ENCODE measurements at regions of chr3 and their contacts with region 1.

Region 1: DNA sequence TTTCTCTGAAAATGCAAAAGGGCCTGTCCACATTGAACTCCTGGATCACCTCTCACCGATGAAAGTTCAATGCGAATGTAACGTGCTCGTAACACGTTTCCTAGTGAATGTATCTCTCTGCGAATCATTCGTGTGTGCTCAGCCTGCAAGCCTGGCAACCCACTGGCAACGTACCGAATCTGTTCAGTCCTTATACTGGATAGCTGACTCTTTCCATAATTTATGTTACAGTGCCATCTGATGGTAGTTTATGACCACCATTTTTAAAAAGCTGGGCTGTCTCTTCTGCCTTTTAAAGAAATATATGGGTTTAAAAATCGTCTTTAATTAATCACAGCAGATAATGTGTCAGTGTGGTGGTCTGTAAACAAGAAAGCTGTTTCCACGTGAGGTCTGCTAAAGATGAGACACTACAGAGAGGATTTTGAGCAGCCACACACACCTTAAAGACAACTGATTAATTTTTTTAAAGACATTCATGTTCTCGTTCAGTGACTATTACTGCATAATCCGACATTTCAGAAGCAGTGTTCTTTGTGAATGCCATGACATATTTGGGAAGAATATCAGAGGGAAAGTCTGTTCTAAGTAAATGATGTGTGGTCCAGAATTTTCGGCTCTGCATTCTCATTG is 69.4 kb upstream of the FOXP1 start:
- DNase-seq: peak; percentile 4
- ATAC-seq: peak; percentile 60; the same call in 1 of the 2 replicates
- H3K4me3 ChIP-seq: no peak overlapping the region
- H3K27ac ChIP-seq: no peak overlapping the region
- H3K4me1 ChIP-seq: peaks cover 0 to 2% of the 10 kb centered on the region in 2 experiments; a peak in 1 of 4 replicates
- H3K27me3 ChIP-seq: no peaks in the 10 kb centered on the region
- CTCF ChIP-seq: peak; percentile 25 to 60 (median 35); a peak in 4 of 6 replicates
- POLR2A ChIP-seq: no peak
- RAD21 ChIP-seq: peak; percentile 66

Region 2: DNA sequence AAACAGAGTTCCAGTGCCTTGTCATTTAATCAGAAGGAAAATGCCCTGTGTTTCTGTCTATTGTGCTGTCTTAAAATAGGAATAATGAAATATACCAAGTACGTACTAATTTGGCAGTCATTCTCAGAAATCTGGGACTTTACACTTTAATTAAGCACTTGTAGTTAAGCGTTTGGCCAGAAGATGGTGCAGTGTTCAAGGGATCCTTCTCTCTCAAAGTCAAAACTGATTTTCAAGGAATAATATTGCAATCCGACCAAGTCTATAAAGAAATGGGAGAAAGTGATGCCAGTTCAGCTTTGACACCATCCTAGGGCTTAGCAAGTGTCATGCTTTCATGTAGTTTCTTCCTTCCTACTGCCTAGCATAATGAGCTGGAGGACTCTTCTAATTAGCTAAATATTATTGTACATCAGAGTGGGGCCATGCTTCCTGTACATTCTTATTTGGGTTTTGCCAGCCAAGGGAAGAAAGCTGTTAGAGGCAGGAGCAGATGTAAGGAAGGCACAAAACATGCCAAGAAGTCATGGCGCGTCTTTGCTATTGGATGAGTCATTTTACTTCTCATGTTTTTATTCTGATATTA is 1588.6 kb before region 1 on chr3:
- CTCF ChIA-PET with region 1: no interaction called
- POLR2A ChIA-PET with region 1: no interaction called
- RAD21 ChIA-PET with region 1: no interaction called
- intact Hi-C with region 1: loop called (anchors 2 kb)
- DNase-seq: peak; percentile 4
- ATAC-seq: no peak
- H3K4me3 ChIP-seq: no peak overlapping the region
- H3K27ac ChIP-seq: no peak overlapping the region
- H3K4me1 ChIP-seq: no peaks in the 10 kb centered on the region
- H3K27me3 ChIP-seq: no peaks in the 10 kb centered on the region; the same call in 1 of the 2 replicates
- CTCF ChIP-seq: peak; percentile 11 to 64 (median 34); a peak in 4 of 6 replicates
- POLR2A ChIP-seq: no peak
- RAD21 ChIP-seq: peak; percentile 49; the same call in 1 of the 2 replicates

Region 3: GRCh38 chr3:70531063-70531657 is 1121.7 kb before region 1 on chr3:
- CTCF ChIA-PET with region 1: interaction called, 4 read pairs
- POLR2A ChIA-PET with region 1: no interaction called
- RAD21 ChIA-PET with region 1: no interaction called
- intact Hi-C with region 1: loop called (anchors 5 kb)
- DNase-seq: no peak
- ATAC-seq: no peak
- H3K4me3 ChIP-seq: no peak overlapping the region
- H3K27ac ChIP-seq: no peak overlapping the region
- H3K4me1 ChIP-seq: no peaks in the 10 kb centered on the region
- H3K27me3 ChIP-seq: no peaks in the 10 kb centered on the region; the same call in 1 of the 2 replicates
- CTCF ChIP-seq: peak; percentile 19 to 52 (median 28); a peak in 4 of 6 replicates
- POLR2A ChIP-seq: no peak
- RAD21 ChIP-seq: peak; percentile 46; the same call in 1 of the 2 replicates

Region 4: DNA sequence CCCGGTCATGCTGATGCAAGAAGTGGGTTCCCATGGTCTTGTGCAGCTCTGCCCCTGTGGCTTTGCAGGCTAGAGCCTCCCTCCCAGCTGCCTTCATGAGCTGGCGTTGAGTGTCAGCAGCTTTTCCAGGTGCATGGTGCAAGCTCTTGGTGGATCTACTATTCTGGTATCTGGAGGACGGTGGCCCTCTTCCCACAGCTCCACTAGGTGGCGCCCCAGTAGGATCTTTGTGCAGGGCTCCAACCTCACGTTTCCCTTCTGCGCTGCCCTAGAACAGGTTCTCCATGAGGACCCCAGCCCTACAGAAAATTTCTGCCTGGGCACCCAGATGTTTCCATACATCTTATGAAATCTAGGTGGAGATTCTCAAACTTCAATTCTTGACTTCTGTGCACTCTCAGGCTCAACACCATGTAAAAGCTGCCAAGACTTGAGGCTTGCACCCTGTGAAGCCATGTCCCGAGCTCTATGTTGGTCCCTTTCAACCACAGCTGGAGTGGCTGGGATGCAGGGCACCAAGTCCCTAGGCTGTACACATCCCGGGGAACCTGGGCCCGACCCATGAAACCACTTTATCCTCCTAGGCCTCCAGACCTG is 1102.1 kb before region 1 on chr3:
- CTCF ChIA-PET with region 1: interaction called, 9 read pairs
- POLR2A ChIA-PET with region 1: no interaction called
- RAD21 ChIA-PET with region 1: no interaction called
- intact Hi-C with region 1: loop called (anchors 5 kb)
- DNase-seq: no peak
- ATAC-seq: peak; percentile 79
- H3K4me3 ChIP-seq: no peak overlapping the region
- H3K27ac ChIP-seq: no peak overlapping the region
- H3K4me1 ChIP-seq: no peaks in the 10 kb centered on the region
- H3K27me3 ChIP-seq: no peaks in the 10 kb centered on the region
- CTCF ChIP-seq: peak in 2 of 3 experiments; percentile 57; a peak in 4 of 6 replicates
- POLR2A ChIP-seq: no peak
- RAD21 ChIP-seq: peak; percentile 47